ENCODE measurements at regions of chr20 and their contacts with region 1.

Region 1: DNA sequence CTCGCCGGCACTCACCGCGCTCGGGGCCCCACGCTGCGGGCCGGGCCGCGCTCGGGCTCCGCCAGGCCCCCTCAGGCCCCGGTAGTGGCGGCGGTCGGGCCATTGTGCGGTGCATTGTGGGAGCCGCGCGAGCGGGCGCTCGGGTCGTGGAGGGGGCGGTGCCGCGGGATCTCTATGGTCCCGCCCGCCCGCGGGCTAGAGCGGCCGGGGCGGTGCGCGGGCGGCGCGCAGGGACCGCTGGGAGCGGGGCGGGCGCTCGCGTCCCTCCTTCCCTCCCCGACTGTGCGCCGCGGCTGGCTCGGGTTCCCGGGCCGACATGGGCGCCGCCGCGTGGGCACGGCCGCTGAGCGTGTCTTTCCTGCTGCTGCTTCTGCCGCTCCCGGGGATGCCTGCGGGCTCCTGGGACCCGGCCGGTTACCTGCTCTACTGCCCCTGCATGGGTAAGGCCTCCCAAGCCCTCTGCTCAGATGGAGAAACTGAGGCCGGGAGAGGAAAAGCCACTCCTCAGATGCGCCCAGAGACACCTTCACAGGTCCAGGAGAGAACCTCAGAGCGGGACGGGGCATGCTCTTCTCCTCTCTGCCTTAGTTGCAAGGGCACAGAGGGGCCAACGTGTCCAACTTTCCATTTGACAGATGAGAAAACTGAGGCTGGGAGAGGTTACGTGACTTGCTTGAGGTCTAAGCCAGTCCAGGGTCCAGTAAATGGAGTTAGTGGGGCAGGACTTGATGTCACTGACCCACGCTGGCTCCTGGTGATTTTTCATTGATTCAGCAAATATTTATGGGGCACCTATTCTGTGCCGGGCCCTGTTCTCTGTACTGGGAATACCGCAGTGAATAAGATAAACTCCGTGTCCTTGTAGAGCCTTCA is at the starts of genes PLAGL2 and POFUT1:
- DNase-seq: peak; percentile 98
- H3K4me3 Mint-ChIP-seq: peak within 1 kb of the TSS; percentile 99
- H3K27ac Mint-ChIP-seq: peak within 1 kb of the TSS; percentile 91
- H3K4me1 Mint-ChIP-seq: peaks cover 65% of the 10 kb centered on the region
- H3K27me3 Mint-ChIP-seq: no peaks in the 10 kb centered on the region
- total RNA-seq, gene PLAGL2: 119 and 120 TPM in 2 replicates
- total RNA-seq, gene POFUT1: 65.7 and 68.1 TPM in 2 replicates

Region 2: GRCh38 chr20:31968291-31969126 is 239.4 kb before region 1 on chr20:
- intact Hi-C with region 1: no loop called
- DNase-seq: peak; percentile 97
- H3K4me3 Mint-ChIP-seq: peak overlapping the region; percentile 82
- H3K27ac Mint-ChIP-seq: peak overlapping the region; percentile 37
- H3K4me1 Mint-ChIP-seq: peaks cover 6% of the 10 kb centered on the region
- H3K27me3 Mint-ChIP-seq: peaks cover 28% of the 10 kb centered on the region

Region 3: DNA sequence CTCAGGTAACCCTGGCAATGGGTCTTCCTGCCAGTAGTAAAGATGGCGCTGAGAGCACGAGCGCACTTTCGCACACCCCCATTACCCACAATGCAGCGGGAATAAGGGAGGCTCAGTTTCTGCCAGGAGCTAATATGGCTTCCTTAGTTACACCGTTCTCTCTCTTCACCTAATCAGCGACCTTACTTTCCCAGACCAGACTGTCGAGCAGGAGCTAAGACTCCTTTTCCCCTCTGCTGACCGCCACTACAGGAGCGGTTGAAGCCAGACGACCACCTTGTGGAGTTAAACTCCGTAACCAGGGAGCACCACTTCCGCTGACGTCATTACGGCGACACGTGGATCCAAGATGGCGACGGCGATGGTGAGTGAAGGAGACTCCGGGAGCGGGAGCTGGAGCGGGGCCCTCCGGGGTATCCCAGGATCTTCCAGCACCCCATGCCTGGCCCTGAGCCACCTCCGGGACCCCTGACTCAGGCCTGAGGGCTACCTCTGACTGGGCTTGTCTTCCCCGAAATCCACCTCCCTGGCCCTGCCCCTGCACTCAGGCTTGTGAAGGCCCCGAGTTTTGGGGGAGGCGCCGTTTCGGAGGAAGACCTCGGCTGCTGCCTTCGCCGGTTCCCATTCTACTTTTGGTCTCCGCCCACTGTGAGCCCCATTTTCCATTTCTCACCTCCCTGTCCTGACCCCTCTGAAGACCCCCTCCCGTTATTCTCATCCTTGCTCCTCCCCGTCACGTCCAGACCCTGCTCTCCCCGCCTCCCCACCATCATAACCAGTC is 98.3 kb before region 1 on chr20 and contains the start of gene TM9SF4:
- intact Hi-C with region 1: loop called (anchors 1 kb)
- DNase-seq: peak; percentile 97
- H3K4me3 Mint-ChIP-seq: peak within 1 kb of the TSS; percentile 92
- H3K27ac Mint-ChIP-seq: peak within 1 kb of the TSS; percentile 100
- H3K4me1 Mint-ChIP-seq: peaks cover 31% of the 10 kb centered on the region
- H3K27me3 Mint-ChIP-seq: peaks cover 3% of the 10 kb centered on the region
- total RNA-seq, gene TM9SF4: 48.9 and 49.8 TPM in 2 replicates

Region 4: DNA sequence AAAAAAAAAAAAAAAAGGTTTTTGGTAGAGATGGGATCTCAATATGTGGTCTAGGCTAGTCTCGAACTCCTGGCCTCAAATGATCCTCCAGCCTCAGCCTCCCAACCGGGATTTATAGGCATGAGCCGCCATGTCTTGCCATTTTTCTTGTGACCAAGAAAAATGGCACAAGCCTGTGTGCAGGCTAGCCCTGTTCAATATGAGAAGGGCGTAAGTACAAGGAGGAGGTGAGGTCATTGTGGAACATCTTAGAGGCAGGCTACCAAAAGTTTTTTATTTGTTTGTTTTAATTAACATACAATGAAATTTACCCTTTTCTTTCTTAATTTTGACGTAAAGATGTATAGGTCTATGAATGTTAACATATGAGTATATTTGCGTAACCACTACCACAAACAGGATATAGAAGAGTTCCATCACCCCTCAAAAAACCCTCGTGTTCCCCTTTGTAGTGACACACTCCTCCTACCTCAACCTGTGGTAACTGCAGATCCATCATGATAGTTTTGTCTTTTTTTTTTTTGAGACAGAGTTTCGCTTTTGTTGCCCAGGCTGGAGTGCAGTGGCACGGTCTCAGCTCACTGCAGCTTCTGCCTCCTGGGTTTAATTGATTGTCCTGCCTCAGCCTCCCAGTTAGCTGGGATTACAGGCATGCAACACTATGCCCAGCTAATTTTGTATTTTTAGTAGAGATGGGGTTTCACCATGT is 41.3 kb after region 1 on chr20:
- intact Hi-C with region 1: loop called (anchors 1 kb)
- DNase-seq: peak; percentile 85
- H3K4me3 Mint-ChIP-seq: peak overlapping the region; percentile 56
- H3K27ac Mint-ChIP-seq: peak overlapping the region; percentile 90
- H3K4me1 Mint-ChIP-seq: peaks cover 49% of the 10 kb centered on the region
- H3K27me3 Mint-ChIP-seq: no peaks in the 10 kb centered on the region

Region 5: GRCh38 chr20:32336918-32337347 is 129.1 kb after region 1 on chr20:
- intact Hi-C with region 1: loop called (anchors 1 kb)
- DNase-seq: peak; percentile 65
- H3K4me3 Mint-ChIP-seq: no peak overlapping the region
- H3K27ac Mint-ChIP-seq: peak overlapping the region; percentile 4
- H3K4me1 Mint-ChIP-seq: peaks cover 33% of the 10 kb centered on the region
- H3K27me3 Mint-ChIP-seq: no peaks in the 10 kb centered on the region

Region 6: GRCh38 chr20:32484958-32485769 is 277.3 kb after region 1 on chr20:
- intact Hi-C with region 1: loop called (anchors 1 kb)
- DNase-seq: peak; percentile 94
- H3K4me3 Mint-ChIP-seq: peak overlapping the region; percentile 85
- H3K27ac Mint-ChIP-seq: peak overlapping the region; percentile 86
- H3K4me1 Mint-ChIP-seq: peaks cover 19% of the 10 kb centered on the region
- H3K27me3 Mint-ChIP-seq: no peaks in the 10 kb centered on the region

Region 7: GRCh38 chr20:32819992-32820710 is 612.3 kb after region 1 on chr20:
- intact Hi-C with region 1: loop called (anchors 5 kb)
- DNase-seq: no peak
- H3K4me3 Mint-ChIP-seq: peak overlapping the region; percentile 91
- H3K27ac Mint-ChIP-seq: peak overlapping the region; percentile 93
- H3K4me1 Mint-ChIP-seq: peaks cover 37% of the 10 kb centered on the region
- H3K27me3 Mint-ChIP-seq: no peaks in the 10 kb centered on the region

Measured in activated CD4-positive, alpha-beta T cell treated with anti-CD3 and anti-CD28 coated beads, Interleukin-2, amount 10 ng/mL, durations not matched to agents 24 days and 14 days (primary cell).